ENCODE measurements at regions of chr7 and their contacts with region 1.

Region 1: GRCh38 chr7:107579885-107580715 is at the start of gene BCAP29:
- DNase-seq: peak; percentile 89
- ATAC-seq: peak; percentile 97
- total RNA-seq, gene BCAP29: 113 TPM

Region 2: DNA sequence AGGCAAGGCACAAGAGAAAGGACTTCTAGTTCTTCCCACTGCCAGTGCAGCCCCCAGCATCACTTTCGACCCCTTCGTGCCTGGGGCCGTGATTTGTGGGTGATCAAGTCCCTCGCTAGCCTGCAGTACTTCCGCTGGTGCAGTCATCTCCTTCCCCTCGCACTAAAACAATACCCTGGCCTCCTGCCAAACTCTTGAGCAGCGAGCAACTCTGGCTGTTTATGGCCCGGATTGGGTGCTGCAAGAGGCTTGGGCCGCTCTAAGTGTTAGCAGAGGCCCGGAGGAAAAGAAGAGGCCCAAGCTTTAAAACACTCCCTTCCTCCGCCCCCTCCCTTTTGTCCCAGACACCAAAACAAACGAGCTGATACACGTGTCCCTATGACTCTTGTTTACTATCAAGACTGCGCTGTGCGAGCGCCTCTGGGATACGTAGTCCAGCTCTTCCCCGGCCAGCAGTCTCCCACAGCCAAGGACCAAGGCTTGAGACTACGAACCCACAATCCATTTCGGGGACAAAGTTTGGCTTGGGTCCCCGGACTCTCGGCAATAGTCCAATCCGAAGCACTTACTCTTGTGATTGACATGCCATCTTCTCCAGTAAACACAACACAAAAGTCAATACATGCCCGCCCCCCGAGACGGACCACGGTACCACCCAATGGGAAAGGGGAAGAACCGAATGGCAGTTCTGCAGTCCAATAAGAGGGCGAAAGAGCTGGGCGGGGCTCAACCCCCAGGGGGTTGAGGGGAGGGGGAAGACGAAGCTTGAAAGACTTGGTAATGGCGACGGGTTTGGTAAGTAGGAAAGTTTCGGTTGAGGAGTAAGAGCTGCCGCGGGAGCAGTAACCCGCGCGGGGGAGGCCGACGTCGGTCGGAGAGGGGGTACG is 411.6 kb before region 1 on chr7 and contains the start of gene HBP1:
- intact Hi-C with region 1: loop called (anchors 10 kb)
- DNase-seq: peak; percentile 98
- ATAC-seq: peak; percentile 95
- total RNA-seq, gene HBP1: 65.8 TPM

Region 3: GRCh38 chr7:107201795-107202450 is 378.2 kb before region 1 on chr7:
- intact Hi-C with region 1: loop called (anchors 10 kb)
- DNase-seq: no peak
- ATAC-seq: peak; percentile 89

Region 4: GRCh38 chr7:107480932-107481331 is 99.2 kb before region 1 on chr7:
- intact Hi-C with region 1: loop called (anchors 2 kb)
- DNase-seq: no peak
- ATAC-seq: peak; percentile 94

Region 5: GRCh38 chr7:107725151-107725740 is 145.1 kb after region 1 on chr7:
- intact Hi-C with region 1: loop called (anchors 10 kb)
- DNase-seq: no peak
- ATAC-seq: no peak

Region 6: DNA sequence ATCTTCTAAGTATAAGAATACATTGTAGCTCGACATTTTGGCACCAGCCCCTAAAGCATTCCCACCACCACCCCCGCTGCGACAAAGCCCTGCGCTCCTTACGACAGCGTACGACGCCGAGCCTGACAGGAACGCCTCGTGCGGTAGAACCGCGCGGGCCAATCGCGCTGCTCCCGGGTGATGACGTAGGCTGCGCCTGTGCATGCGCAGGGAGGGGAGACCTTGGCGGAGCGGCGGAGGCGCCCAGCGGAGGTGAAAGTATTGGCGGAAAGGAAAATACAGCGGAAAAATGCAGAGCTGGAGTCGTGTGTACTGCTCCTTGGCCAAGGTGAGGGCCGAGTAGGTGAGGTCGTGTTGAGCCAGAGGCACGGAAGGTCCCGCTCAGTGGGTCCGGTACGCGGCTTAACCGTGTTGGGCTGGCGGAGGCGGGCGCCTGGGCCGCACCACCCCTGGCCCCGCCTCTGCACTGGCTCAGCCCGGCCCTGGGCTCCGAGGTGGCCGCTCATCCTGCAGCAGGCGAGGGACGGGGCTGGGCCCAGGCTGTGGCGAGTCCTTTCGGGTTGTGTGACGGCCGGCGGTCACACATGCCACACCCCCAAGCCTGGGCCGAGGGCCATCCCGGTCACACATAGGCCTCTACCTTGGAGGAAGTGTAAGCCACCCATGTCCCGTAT is 311.0 kb after region 1 on chr7 and contains the start of gene DLD:
- intact Hi-C with region 1: loop called (anchors 10 kb)
- DNase-seq: peak; percentile 99
- ATAC-seq: peak; percentile 99
- total RNA-seq, gene DLD: 288 TPM

Measured in Right ventricle myocardium inferior (tissue), 1 donor.